Calu3 (cell line): ENCODE measurements at regions of chr1 and their contacts with region 1.

Region 1: DNA sequence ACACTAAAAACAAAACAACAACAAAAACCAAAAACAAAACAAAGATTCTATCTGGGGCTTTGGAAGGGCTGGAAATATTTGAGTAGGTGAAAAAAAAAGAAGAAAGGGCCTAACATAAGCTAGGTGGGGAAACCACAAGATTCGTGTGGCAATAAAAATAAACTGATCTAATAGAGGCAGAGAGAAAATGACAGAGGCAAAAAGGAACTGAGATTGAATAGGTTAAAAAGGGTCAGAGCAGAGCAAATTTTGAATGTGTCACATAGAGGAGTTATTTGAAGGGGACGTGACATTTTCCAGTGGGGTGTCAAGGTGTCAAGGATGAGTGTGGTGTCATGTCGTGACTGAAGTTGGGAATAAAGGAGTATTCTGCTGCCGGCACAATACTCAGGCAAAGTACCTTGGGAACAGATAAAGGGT is 65.2 kb upstream of the RALGPS2 start:
- DNase-seq: no peak
- H3K4me3 Mint-ChIP-seq: no peak overlapping the region
- H3K27ac Mint-ChIP-seq: no peak overlapping the region
- H3K4me1 Mint-ChIP-seq: peaks cover 24% of the 10 kb centered on the region
- H3K27me3 Mint-ChIP-seq: no peaks in the 10 kb centered on the region
- CTCF ChIP-seq: no peak

Region 2: GRCh38 chr1:178607718-178608408 is 51.9 kb before region 1 on chr1:
- CTCF ChIA-PET with region 1: interaction called, 4 read pairs
- intact Hi-C with region 1: loop called (anchors 5 kb)
- DNase-seq: no peak
- H3K4me3 Mint-ChIP-seq: no peak overlapping the region
- H3K27ac Mint-ChIP-seq: peak overlapping the region; percentile 92
- H3K4me1 Mint-ChIP-seq: peaks cover 58% of the 10 kb centered on the region
- H3K27me3 Mint-ChIP-seq: no peaks in the 10 kb centered on the region
- CTCF ChIP-seq: no peak

Region 3: GRCh38 chr1:178684542-178685000 is 24.8 kb after region 1 on chr1:
- CTCF ChIA-PET with region 1: no interaction called
- intact Hi-C with region 1: loop called (anchors 1 kb)
- DNase-seq: no peak
- H3K4me3 Mint-ChIP-seq: no peak overlapping the region
- H3K27ac Mint-ChIP-seq: peak overlapping the region; percentile 78
- H3K4me1 Mint-ChIP-seq: peaks cover 36% of the 10 kb centered on the region
- H3K27me3 Mint-ChIP-seq: no peaks in the 10 kb centered on the region
- CTCF ChIP-seq: no peak

Region 4: DNA sequence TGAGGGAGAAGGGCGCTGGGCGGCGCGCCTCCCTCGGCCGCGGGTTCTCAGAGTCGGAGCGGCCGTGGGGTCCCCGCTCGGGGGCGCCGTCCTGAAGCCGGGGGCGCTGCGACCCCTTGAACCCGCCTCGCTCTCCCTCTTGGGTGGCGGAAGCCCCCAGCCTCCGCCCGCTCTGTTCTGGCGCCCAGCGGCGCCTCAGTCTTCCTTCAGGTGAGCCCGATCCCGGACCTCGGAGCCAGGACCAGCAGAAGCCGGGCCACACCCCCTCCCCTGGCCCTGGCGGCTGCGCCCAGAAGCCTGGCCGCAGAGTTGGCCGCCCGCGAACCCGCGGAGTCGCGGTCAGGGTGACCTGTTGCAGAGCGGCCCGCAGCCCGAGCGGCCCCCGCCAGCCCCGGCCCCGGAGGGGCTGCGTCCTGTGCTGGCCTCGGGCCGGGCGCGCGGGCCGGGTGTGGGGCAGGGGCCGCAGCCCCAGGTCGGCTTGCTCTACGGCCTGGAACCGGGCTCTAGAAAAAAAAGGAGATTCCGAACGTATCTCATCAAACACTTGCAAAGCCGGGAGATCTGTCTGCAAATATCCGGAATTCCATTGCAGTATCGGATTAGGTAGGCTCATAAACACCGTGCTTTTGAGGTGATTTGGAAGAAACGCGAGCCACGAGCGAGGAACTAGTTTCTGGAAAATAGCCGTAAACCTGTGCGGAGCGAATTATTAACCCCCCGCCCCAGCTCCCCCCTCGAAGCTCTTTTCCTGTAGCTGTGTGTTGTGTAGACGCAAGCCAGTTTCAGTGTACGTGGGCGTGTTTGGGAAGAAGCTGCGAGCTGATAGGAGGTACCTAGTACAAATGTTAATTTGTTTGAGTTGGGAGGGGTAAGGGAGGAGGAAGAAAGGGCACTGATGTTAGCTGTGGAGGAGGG is 66.1 kb after region 1 on chr1:
- CTCF ChIA-PET with region 1: no interaction called
- intact Hi-C with region 1: loop called (anchors 5 kb)
- DNase-seq: peak; percentile 84
- H3K4me3 Mint-ChIP-seq: peak overlapping the region; percentile 84
- H3K27ac Mint-ChIP-seq: peak overlapping the region; percentile 88
- H3K4me1 Mint-ChIP-seq: peaks cover 35% of the 10 kb centered on the region
- H3K27me3 Mint-ChIP-seq: no peaks in the 10 kb centered on the region
- CTCF ChIP-seq: no peak